ENCODE measurements at regions of chr5 and their contacts with region 1.

Region 1: GRCh38 chr5:122286541-122286940 is 25.5 kb upstream of the SNCAIP start:
- DNase-seq: no peak
- ATAC-seq: peak in 1 of 8 donors; percentile 4
- H3K4me3 ChIP-seq: no peak overlapping the region
- H3K27ac ChIP-seq: no peak overlapping the region
- H3K4me1 ChIP-seq: no peaks in the 10 kb centered on the region
- H3K27me3 ChIP-seq: peaks cover 0 to 3% (median 0%) of the 10 kb centered on the region in 7 donors
- CTCF ChIP-seq: no peak

Region 2: GRCh38 chr5:122408592-122409224 is 122.2 kb after region 1 on chr5:
- intact Hi-C with region 1: loop called in 2 of 10 experiments (anchors 10 kb)
- DNase-seq: no peak
- ATAC-seq: no peak
- H3K4me3 ChIP-seq: no peak overlapping the region
- H3K27ac ChIP-seq: no peak overlapping the region
- H3K4me1 ChIP-seq: no peaks in the 10 kb centered on the region
- H3K27me3 ChIP-seq: no peaks in the 10 kb centered on the region
- CTCF ChIP-seq: no peak

Measured in heart right ventricle (tissue), 16 donors.